ENCODE measurements at regions of chr4 and their contacts with region 1.

Region 1: GRCh38 chr4:71270901-71271300 is 67.9 kb upstream of the SLC4A4 start:
- DNase-seq: peak; percentile 17
- CTCF ChIP-seq: peak; percentile 31

Region 2: GRCh38 chr4:71713611-71714203 is 442.8 kb after region 1 on chr4:
- in situ Hi-C with region 1: loop called (anchors 25 kb)
- DNase-seq: no peak
- CTCF ChIP-seq: peak; percentile 19

Measured in GM13976 (cell line).